Left cardiac atrium (tissue), 4 donors: ENCODE measurements at regions of chr4 and their contacts with region 1.

Region 1: DNA sequence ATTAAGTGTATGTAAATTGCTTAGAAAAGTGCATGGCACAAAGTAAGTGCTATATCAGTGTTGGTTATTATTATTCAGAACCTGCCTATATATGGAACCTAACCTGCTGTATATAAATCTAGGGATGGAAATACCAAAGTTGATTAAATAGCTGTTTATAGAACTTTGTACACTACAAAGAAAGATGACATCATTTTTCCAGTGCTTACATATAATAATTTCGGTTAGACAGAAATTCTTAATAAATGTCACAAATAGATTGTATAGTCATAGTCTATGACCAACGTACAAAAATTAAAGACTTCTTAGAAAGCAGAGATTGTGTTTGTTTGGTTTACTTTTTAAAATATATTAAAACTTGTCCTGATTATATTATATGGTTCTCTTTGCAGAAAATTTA is 4.4 kb downstream of the GYPB start:
- DNase-seq: no peak
- ATAC-seq: no peak

Region 2: DNA sequence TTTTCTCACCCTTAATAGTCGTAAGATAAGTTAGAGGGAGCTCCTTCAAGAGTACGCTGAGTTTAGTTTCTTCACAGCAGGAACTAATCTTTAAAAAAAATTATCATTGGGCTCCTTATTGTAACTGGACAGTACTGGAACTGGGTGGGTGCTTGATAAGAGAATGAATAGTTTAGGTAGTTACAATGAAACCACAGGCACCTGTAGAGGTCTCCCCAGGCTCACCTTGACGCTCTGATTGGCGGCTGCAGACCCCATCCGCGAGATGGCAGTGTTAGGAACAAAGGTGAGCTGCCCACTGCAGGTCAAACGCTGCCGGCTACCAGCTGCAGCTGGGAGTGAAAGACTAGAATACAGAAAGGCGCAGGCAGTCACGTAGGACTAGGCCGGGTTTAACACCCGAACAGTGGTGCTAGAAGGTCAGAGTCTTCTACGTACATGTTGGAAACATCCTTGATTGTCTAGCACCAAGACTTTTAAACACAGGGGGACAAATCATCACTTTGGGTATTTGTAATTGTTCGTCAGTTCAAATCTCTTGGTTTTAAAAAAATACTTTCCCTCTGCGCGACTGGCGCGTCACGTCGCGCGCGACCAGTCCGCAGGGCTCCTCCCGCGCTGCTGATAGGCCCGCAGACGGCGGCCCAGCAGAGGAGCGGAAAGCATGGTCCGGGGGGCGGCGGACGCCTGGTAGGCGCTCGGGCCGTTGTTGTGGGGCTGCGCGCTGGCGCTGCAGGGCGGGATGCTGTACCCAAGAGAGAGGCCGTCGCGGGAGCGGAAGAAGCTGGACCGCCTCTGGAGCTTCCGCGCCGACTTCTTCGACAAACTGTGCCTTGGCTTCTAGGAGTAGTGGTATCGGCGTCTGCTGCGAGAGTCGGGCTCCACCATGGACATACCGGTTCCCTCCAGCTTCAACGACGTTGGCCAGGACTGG is 455.7 kb before region 1 on chr4:
- intact Hi-C with region 1: loop called in 1 of 2 experiments (anchors 5 kb)
- DNase-seq: peak; percentile 68
- ATAC-seq: peak; percentile 90 to 93